ENCODE measurements at regions of chr19 and their contacts with region 1.

Region 1: DNA sequence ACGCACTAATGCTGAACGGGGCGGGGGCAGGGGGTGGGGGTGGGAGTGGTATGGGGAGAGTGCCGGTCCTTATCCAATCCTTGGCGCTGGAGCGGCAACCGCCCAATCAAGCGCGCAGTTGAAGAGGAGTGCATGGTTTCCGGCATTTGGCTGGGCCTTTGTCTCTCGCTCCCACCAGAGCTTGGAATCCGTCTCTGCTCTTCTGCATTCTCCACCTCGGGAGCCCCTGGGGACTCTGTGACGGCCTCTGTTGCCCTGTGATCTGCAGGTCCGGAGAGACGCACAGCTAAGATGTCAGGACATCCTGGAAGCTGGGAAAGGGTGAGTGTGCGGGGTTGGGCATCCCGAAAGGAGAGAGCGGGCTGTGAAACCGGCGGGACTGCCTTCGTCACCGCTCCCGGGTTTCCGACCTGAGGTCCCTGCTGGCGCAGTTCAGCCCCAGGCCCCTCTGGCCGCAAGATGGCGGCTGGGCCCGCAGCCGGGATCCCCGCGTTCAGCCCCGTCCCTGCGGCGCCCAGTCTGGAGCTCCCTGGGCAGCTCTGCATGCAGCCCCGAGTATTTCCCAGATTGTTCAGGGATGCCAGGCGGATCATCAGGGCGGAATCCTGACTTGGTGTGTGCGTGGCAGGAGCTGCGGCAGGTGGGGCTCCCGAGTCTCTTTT is 53.6 kb upstream of the ZNF254 start:
- DNase-seq: peak; percentile 90
- H3K4me3 ChIP-seq: peak overlapping the region; percentile 92
- H3K27ac ChIP-seq: peak overlapping the region; percentile 88
- H3K4me1 ChIP-seq: peaks cover 21% of the 10 kb centered on the region
- H3K27me3 ChIP-seq: no peaks in the 10 kb centered on the region
- CTCF ChIP-seq: no peak

Region 2: GRCh38 chr19:23882493-23882892 is 150.9 kb before region 1 on chr19:
- CTCF ChIA-PET with region 1: no interaction called
- POLR2A ChIA-PET with region 1: no interaction called
- intact Hi-C with region 1: no loop called
- DNase-seq: no peak
- H3K4me3 ChIP-seq: no peak overlapping the region
- H3K27ac ChIP-seq: no peak overlapping the region
- H3K4me1 ChIP-seq: no peaks in the 10 kb centered on the region
- H3K27me3 ChIP-seq: peaks cover 8% of the 10 kb centered on the region
- CTCF ChIP-seq: no peak

Region 3: GRCh38 chr19:23914402-23915301 is 118.8 kb before region 1 on chr19 and contains the start of gene ZNF726:
- CTCF ChIA-PET with region 1: no interaction called
- POLR2A ChIA-PET with region 1: no interaction called
- intact Hi-C with region 1: loop called (anchors 1 kb)
- DNase-seq: peak; percentile 82 to 90
- H3K4me3 ChIP-seq: peak within 1 kb of the TSS; percentile 71
- H3K27ac ChIP-seq: peak within 1 kb of the TSS; percentile 30; the same call in 1 of the 2 replicates
- H3K4me1 ChIP-seq: peaks cover 13% of the 10 kb centered on the region
- H3K27me3 ChIP-seq: no peaks in the 10 kb centered on the region
- CTCF ChIP-seq: no peak
- total RNA-seq, gene ZNF726: 7.5 and 9.3 TPM in 2 replicates

Region 4: GRCh38 chr19:23999821-24000610 is 33.4 kb before region 1 on chr19:
- CTCF ChIA-PET with region 1: no interaction called
- POLR2A ChIA-PET with region 1: no interaction called
- intact Hi-C with region 1: no loop called
- DNase-seq: peak; percentile 25 to 90
- H3K4me3 ChIP-seq: no peak overlapping the region
- H3K27ac ChIP-seq: peak overlapping the region; percentile 62
- H3K4me1 ChIP-seq: peaks cover 20% of the 10 kb centered on the region
- H3K27me3 ChIP-seq: no peaks in the 10 kb centered on the region
- CTCF ChIP-seq: no peak

Region 5: GRCh38 chr19:24086974-24087595 is 53.7 kb after region 1 on chr19 and contains the start of gene ZNF254:
- CTCF ChIA-PET with region 1: no interaction called
- POLR2A ChIA-PET with region 1: interaction called, 5 read pairs
- intact Hi-C with region 1: loop called (anchors 5 kb)
- DNase-seq: peak; percentile 88 to 94
- H3K4me3 ChIP-seq: peak within 1 kb of the TSS; percentile 80
- H3K27ac ChIP-seq: peak within 1 kb of the TSS; percentile 25
- H3K4me1 ChIP-seq: peaks cover 11% of the 10 kb centered on the region; the same call in 1 of the 2 replicates
- H3K27me3 ChIP-seq: no peaks in the 10 kb centered on the region
- CTCF ChIP-seq: no peak
- total RNA-seq, gene ZNF254: 11.6 and 12.5 TPM in 2 replicates